ENCODE measurements at regions of chr1 and their contacts with region 1.

Region 1: DNA sequence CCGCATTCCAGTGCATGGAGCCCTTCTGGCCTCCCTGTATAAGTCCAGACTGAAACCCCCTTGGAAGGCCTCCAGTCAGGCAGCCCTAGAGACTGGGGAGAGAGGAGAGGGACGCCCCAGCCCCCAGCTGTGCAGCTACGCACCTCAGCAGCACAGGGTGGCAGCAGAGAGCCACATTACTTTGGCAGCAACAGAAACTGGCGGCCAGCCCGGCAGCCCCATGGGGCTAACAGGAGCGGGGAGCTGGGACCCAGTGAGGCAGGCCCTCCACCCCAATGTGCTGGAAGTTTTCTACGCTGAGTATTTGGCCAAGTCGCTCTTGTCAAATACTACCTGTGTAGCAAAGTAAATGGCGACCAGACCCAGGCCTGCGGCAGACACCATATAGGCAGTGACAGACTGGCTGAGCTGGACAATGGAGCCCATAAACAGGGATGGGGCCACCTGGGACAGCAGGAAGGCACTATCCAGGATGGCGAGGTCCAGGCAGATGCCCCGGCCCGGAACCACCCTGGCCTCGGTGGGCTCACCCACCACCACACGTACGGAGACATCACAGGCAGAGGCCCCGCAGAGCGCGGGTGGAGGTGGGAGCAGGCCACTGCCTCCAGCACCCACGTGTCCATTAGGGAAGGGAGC is 21.2 kb downstream of the SLC45A3 start:
- DNase-seq: peak; percentile 70
- H3K4me3 ChIP-seq: no peak overlapping the region
- H3K27ac ChIP-seq: no peak overlapping the region
- H3K4me1 ChIP-seq: peaks cover 16% of the 10 kb centered on the region
- H3K27me3 ChIP-seq: no peaks in the 10 kb centered on the region
- CTCF ChIP-seq: peak; percentile 89 to 91
- POLR2A ChIP-seq: no peak

Region 2: DNA sequence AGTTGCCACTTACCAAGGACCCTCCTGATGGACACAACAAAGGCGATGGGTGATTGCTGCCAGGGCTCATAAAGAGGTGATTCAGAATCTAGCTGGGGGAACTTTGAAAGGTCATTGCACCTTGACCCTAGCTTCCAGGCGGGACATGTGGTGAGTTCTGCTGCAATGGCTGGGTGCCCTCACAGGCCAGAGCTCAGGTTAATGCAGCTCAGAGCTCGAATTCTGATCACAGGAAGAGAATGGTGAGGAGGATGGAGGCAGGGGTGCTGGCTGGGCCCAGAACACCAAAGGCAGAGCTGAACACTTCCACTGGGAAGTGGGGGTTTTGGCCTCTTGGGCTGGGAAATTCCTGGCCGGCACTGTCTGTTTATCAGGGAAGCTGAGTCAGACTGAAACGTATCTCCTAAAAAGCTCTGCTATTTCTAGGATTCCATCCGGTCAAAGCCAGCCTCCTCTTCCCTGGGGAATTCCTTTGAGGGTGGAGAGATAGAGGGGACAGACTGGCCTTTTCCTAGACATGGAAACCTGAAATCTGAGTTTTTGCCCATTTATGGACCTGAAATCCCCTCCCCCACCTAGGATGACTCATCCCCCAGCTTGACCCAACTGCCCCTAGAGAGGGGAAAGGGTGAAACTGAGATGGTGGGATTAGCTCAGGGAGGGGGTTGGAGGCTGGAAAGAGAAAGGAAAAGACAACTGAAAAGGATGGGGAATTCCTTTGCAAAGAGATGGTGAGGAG is 364.7 kb before region 1 on chr1:
- CTCF ChIA-PET with region 1: no interaction called
- POLR2A ChIA-PET with region 1: no interaction called
- dilution Hi-C with region 1: no loop called
- intact Hi-C with region 1: no loop called
- DNase-seq: peak; percentile 91
- H3K4me3 ChIP-seq: no peak overlapping the region
- H3K27ac ChIP-seq: peak overlapping the region; percentile 61
- H3K4me1 ChIP-seq: peaks cover 30% of the 10 kb centered on the region
- H3K27me3 ChIP-seq: no peaks in the 10 kb centered on the region
- CTCF ChIP-seq: no peak
- POLR2A ChIP-seq: no peak

Region 3: GRCh38 chr1:205528887-205529825 is 129.9 kb before region 1 on chr1:
- CTCF ChIA-PET with region 1: interaction called, 292 read pairs
- POLR2A ChIA-PET with region 1: no interaction called
- dilution Hi-C with region 1: no loop called
- intact Hi-C with region 1: loop called (anchors 1 kb)
- DNase-seq: peak; percentile 58
- H3K4me3 ChIP-seq: peak overlapping the region in 1 of 3 experiments; percentile 9
- H3K27ac ChIP-seq: no peak overlapping the region
- H3K4me1 ChIP-seq: peaks cover 3% of the 10 kb centered on the region
- H3K27me3 ChIP-seq: no peaks in the 10 kb centered on the region
- CTCF ChIP-seq: peak; percentile 90 to 95
- POLR2A ChIP-seq: no peak

Region 4: DNA sequence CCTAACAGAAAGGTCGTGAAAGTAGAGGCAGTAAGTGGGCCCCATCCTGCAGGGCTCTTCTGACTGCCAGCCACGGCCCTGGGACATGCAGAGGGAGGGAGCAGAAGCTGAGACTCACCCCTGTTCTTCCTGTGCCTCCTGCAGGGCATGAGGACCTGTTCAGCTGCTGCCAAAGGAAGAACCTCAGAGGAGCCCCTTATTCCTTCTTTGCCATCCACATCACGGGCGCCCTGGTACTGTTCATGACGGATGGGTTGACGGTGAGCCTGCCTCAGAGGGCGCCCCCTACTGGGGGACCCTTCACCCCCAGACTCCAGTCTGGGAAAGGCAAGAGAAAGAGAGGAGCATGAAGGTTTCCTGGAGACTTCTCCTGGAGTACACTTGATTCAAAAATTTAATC is 74.3 kb before region 1 on chr1:
- CTCF ChIA-PET with region 1: interaction called, 615 read pairs
- POLR2A ChIA-PET with region 1: no interaction called
- dilution Hi-C with region 1: no loop called
- intact Hi-C with region 1: no loop called
- DNase-seq: no peak
- H3K4me3 ChIP-seq: no peak overlapping the region
- H3K27ac ChIP-seq: no peak overlapping the region
- H3K4me1 ChIP-seq: peaks cover 19% of the 10 kb centered on the region
- H3K27me3 ChIP-seq: no peaks in the 10 kb centered on the region
- CTCF ChIP-seq: peak; percentile 42 to 43
- POLR2A ChIP-seq: no peak

Region 5: DNA sequence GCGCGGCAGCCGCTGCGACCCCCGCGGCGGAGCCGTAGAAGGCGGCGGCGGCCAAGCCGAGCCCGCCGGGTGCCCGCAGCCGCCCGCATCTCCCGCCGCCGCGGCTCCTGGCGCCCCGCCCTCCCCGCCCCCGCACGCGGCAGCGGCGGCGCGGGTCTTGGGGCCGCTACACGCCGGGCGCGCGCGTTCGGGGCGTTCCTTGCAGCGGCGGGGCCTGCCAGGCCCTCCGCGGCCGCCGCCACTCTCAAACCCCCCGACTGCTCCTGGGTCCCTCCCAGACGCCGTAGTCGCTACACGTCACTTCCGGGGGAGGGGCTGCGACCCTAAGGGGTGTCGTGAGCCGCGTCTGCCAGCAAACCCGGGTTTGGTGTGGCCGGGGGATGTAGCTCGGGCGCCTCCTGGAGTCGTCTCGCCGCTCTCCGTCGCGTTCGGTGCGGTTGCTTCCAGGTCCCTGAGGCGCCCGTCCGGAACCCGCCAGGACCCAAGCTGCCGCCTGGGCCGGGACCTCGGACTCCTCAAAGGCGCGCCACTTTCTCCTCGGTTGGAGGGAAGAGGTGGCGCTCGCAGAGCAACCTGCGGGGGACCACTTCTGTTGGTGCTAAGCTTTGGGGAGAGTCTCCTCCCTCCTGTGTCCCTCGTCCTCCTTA is 27.2 kb before region 1 on chr1 and contains the start of gene ELK4:
- CTCF ChIA-PET with region 1: interaction called, 65 read pairs
- POLR2A ChIA-PET with region 1: no interaction called
- dilution Hi-C with region 1: no loop called
- intact Hi-C with region 1: loop called (anchors 1 kb)
- DNase-seq: peak; percentile 98
- H3K4me3 ChIP-seq: peak within 1 kb of the TSS; percentile 88 to 97 (median 92)
- H3K27ac ChIP-seq: peak within 1 kb of the TSS; percentile 82
- H3K4me1 ChIP-seq: peaks cover 29% of the 10 kb centered on the region
- H3K27me3 ChIP-seq: no peaks in the 10 kb centered on the region
- CTCF ChIP-seq: peak; percentile 72 to 90
- POLR2A ChIP-seq: peak; percentile 88
- total RNA-seq, gene ELK4: 78.7 and 107 TPM in 2 replicates

Region 6: DNA sequence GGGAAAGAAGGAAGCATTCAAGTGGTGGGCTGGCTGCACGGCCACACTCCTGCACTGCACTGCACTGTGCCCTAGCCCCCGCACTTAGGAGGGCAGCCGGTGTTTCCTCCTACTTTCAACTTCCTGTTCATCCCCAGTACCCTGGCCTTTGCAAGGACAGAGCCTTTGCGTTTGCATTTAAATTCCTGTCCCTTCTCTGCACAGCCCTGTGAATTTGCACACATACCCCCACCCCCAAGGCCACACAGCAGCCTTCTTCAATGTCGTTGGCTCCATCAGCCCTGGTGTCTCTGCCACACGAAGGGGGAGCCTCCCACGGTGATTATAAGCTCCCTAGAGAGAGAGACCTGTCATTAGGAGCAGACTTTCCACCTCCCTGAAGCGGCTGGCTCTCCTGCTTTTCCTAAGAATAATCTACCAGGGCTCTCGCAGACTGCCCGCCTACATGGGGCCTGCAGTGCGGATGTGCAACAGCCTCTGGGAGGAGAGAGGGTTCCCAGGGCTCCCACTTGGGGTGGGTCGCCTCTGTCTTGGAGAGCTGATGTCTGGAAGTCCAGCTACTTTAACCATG is 34.4 kb after region 1 on chr1:
- CTCF ChIA-PET with region 1: interaction called, 20 read pairs
- POLR2A ChIA-PET with region 1: interaction called, 3 read pairs
- dilution Hi-C with region 1: no loop called
- intact Hi-C with region 1: no loop called
- DNase-seq: no peak
- H3K4me3 ChIP-seq: no peak overlapping the region
- H3K27ac ChIP-seq: no peak overlapping the region
- H3K4me1 ChIP-seq: no peaks in the 10 kb centered on the region
- H3K27me3 ChIP-seq: no peaks in the 10 kb centered on the region
- CTCF ChIP-seq: no peak
- POLR2A ChIP-seq: no peak

Region 7: GRCh38 chr1:205750138-205751035 is 91.3 kb after region 1 on chr1 and contains the start of gene NUCKS1:
- CTCF ChIA-PET with region 1: interaction called, 12 read pairs
- POLR2A ChIA-PET with region 1: no interaction called
- dilution Hi-C with region 1: no loop called
- intact Hi-C with region 1: no loop called
- DNase-seq: peak; percentile 98
- H3K4me3 ChIP-seq: peak within 1 kb of the TSS; percentile 64 to 86 (median 77)
- H3K27ac ChIP-seq: peak within 1 kb of the TSS; percentile 97
- H3K4me1 ChIP-seq: peaks cover 28% of the 10 kb centered on the region
- H3K27me3 ChIP-seq: peaks cover 8 to 14% of the 10 kb centered on the region in 2 experiments
- CTCF ChIP-seq: no peak
- POLR2A ChIP-seq: no peak
- total RNA-seq, gene NUCKS1: 282 and 288 TPM in 2 replicates

Region 8: DNA sequence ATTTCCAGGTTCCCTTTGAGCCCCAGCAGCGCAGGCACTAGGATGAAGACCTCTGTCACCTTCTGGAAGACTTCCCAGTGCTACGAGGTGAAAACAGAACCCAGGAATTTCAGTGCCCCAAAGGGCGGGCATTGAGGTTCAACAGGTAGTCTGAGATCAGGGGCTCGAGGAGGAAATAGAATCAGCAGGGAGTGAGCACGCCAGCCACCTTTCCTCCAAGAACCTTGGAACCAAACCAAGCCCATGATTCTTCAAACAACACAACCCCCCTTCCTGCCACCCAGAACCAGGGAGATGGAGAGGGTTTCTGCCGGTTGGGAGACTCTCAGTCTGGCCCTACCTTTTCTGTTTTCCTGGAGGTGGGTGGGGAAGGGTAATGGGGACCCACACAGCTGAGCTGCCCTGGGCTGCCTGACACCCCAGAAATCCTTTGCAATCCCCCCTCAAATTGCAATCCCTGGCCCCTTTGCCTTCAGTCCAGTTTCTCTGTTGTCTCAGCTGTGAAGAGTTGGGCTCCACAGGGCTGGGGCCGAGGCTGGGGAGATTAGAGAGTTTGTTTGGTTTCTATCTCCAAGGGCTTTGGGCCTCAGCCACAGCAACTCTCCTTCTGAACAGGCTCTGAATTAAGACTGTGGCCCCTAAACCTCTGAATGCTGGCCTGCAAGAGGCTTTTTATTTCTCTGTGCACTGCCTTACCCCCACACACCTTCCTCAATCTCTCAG is 142.1 kb after region 1 on chr1:
- CTCF ChIA-PET with region 1: no interaction called
- POLR2A ChIA-PET with region 1: no interaction called
- dilution Hi-C with region 1: no loop called
- intact Hi-C with region 1: no loop called
- DNase-seq: no peak
- H3K4me3 ChIP-seq: no peak overlapping the region
- H3K27ac ChIP-seq: no peak overlapping the region
- H3K4me1 ChIP-seq: no peaks in the 10 kb centered on the region
- H3K27me3 ChIP-seq: no peaks in the 10 kb centered on the region
- CTCF ChIP-seq: no peak
- POLR2A ChIP-seq: no peak

Region 9: GRCh38 chr1:205919026-205919746 is 260.1 kb after region 1 on chr1:
- CTCF ChIA-PET with region 1: interaction called, 37 read pairs
- POLR2A ChIA-PET with region 1: interaction called, 5 read pairs
- dilution Hi-C with region 1: no loop called
- intact Hi-C with region 1: no loop called
- DNase-seq: peak; percentile 85
- H3K4me3 ChIP-seq: no peak overlapping the region
- H3K27ac ChIP-seq: no peak overlapping the region
- H3K4me1 ChIP-seq: no peaks in the 10 kb centered on the region
- H3K27me3 ChIP-seq: no peaks in the 10 kb centered on the region
- CTCF ChIP-seq: peak; percentile 83 to 86
- POLR2A ChIP-seq: no peak